ENCODE measurements at regions of chr12 and their contacts with region 1.

Region 1: DNA sequence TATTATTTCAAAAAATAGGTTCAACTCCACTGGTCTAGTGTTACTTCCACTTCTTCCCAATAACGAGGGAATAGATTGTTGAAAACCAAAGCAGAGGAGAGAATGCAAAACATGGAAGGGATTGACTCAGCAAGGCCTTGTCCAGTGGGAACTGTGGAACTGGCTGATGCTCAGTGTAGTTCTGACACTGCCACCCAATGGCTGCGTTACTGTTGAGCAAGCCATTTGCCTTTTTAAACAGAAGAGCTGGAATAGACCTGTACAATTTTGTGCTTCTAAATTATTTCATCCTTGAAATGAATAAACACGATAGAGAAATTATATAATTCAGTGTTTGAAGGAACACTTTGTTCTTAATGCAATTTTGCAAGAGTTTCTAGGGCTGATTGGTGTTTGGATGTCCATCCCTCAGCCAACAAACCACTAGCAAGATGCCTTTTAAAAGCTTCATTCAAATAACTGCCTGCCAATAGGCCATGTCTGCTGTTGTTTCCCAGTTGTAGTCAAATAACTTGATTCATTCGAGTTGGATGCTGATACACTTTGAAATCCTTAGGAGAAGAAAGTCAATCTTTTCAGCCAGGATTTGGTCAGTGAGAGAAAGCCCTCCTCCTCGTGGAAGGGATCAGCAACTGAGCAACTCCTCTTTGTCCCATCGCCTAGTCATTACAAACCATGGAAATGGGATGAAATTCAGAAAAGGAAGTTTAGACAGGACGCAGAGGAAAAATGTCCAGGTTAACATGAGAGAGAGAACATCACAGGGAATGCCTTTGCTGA is 7.3 kb upstream of the MGP start:
- DNase-seq: no peak
- ATAC-seq: peak; percentile 90
- H3K4me3 ChIP-seq: no peak overlapping the region
- H3K27ac ChIP-seq: peak overlapping the region; percentile 77 to 91
- H3K4me1 ChIP-seq: peaks cover 3 to 7% of the 10 kb centered on the region in 2 donors
- H3K27me3 ChIP-seq: no peaks in the 10 kb centered on the region

Region 2: DNA sequence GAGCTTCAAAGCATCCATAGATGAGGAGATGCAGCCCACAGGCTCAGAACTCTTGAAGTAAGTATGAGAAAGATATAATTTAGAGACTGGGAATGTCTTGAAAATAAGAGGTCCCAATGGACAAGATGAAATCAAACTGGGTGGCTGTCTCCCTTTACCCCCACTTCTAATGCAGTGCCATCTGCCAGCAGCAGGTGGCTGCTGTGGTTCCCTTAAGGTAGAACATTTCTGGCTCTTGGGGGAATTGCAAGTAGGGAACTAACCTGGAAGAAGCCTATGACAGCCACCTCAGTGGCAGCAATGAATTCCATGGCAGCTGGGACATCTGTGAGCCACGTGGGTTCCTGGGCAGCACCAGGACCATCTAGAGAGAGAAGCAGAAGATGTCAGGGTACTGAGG is 44.8 kb after region 1 on chr12:
- intact Hi-C with region 1: loop called in 1 of 2 experiments (anchors 5 kb)
- DNase-seq: no peak
- ATAC-seq: no peak
- H3K4me3 ChIP-seq: no peak overlapping the region
- H3K27ac ChIP-seq: no peak overlapping the region
- H3K4me1 ChIP-seq: no peaks in the 10 kb centered on the region
- H3K27me3 ChIP-seq: no peaks in the 10 kb centered on the region

Region 3: DNA sequence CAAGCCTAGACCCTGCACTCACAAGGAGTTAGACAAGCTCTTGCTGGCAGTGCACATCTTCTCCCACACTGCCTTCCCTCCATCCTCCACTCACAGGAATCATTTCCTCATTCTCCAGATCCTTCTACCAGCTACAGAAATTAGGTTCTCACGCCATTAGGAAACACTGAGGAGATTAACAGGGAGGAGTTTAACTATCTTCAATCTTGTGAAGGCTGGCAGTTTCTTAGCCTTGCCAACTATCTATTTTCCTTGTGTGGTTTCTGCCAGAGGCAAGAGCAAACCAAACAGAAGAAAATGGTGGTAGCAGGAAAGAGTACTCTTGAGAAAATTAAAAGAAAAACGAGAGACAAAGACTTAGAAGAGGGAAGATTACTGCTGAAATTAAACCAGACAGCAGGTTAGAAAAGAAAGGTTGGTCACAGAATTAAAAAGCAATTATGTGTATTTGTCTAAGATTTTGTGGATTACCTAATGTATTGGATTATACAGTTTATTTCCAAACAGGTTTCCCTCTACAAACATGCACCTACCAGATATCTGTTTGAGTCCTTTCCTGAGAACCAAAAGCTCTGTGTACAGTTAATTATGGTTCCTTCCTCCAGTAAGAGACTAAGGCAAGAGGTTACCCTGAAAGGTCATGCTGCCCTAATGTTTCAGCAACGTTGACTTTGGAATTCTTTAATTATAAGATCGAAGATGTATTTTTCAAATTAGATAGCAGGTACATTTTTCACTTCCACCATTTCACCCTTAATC is 323.3 kb after region 1 on chr12:
- intact Hi-C with region 1: loop called in 1 of 2 experiments (anchors 5 kb)
- DNase-seq: no peak
- ATAC-seq: no peak
- H3K4me3 ChIP-seq: no peak overlapping the region
- H3K27ac ChIP-seq: peak overlapping the region; percentile 46 to 48
- H3K4me1 ChIP-seq: peaks cover 9 to 12% of the 10 kb centered on the region in 2 donors
- H3K27me3 ChIP-seq: no peaks in the 10 kb centered on the region